H1 (cell line): ENCODE measurements at regions of chr1 and their contacts with region 1.

Region 1: GRCh38 chr1:153816283-153816889 is 41.2 kb downstream of the SLC27A3 start:
- DNase-seq: no peak
- H3K4me3 ChIP-seq: no peak overlapping the region
- H3K27ac ChIP-seq: no peak overlapping the region
- H3K4me1 ChIP-seq: no peaks in the 10 kb centered on the region
- H3K27me3 ChIP-seq: no peaks in the 10 kb centered on the region
- CTCF ChIP-seq: no peak
- EP300 ChIP-seq: no peak
- POLR2A ChIP-seq: no peak
- RAD21 ChIP-seq: no peak

Region 2: GRCh38 chr1:153790313-153790965 is 25.9 kb before region 1 on chr1:
- CTCF ChIA-PET with region 1: no interaction called
- POLR2A ChIA-PET with region 1: no interaction called
- DNase-seq: no peak
- H3K4me3 ChIP-seq: no peak overlapping the region
- H3K27ac ChIP-seq: no peak overlapping the region
- H3K4me1 ChIP-seq: peaks cover 6 to 28% (median 21%) of the 10 kb centered on the region in 4 experiments
- H3K27me3 ChIP-seq: no peaks in the 10 kb centered on the region; a peak in 1 of 7 replicates
- CTCF ChIP-seq: no peak
- EP300 ChIP-seq: no peak
- POLR2A ChIP-seq: no peak
- RAD21 ChIP-seq: no peak

Region 3: GRCh38 chr1:153805042-153805745 is 11.2 kb before region 1 on chr1:
- CTCF ChIA-PET with region 1: interaction called, 11 read pairs
- POLR2A ChIA-PET with region 1: interaction called, 5 read pairs
- DNase-seq: no peak
- H3K4me3 ChIP-seq: no peak overlapping the region
- H3K27ac ChIP-seq: no peak overlapping the region
- H3K4me1 ChIP-seq: no peaks in the 10 kb centered on the region
- H3K27me3 ChIP-seq: no peaks in the 10 kb centered on the region
- CTCF ChIP-seq: no peak
- EP300 ChIP-seq: no peak
- POLR2A ChIP-seq: no peak
- RAD21 ChIP-seq: no peak

Region 4: DNA sequence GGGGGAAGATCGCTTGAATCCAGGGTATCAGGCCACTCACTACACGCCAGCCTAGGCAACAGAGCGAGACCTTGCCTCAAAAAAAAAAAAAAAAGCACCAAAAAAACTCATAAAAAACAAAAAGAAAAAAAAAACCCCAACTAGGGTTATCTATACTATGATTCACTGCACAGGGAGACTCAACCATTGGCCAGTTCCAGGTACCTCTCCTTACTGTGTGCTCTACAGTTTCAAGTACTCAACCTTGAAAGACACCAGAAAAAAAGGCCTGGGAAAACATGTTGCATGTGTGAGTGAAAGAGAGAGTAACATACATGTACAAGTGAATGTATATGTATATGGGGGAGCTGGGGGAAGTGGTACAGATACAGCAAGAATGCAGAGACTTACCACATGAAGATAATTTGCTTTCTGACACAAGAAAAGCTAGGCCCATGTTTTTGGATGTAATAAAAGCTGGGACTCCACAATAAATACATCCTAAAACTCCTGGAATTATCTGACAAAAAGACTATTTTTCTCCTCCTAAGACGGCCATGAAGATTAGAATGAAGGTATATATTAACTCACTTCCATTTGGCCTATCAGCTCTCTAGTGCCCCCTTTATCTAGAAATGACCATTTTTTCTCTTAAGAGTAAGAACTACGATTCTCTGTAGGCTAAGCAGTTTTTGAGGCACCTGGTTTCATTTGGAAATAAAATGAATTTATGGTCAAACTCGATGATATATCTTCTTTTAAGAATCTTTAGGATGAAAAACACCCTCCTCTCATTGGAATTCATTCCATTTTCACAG is 11.0 kb after region 1 on chr1:
- CTCF ChIA-PET with region 1: interaction called, 19 read pairs
- POLR2A ChIA-PET with region 1: interaction called, 3 read pairs
- DNase-seq: no peak
- H3K4me3 ChIP-seq: no peak overlapping the region
- H3K27ac ChIP-seq: no peak overlapping the region
- H3K4me1 ChIP-seq: no peaks in the 10 kb centered on the region
- H3K27me3 ChIP-seq: no peaks in the 10 kb centered on the region
- CTCF ChIP-seq: peak in 1 of 3 experiments; percentile 20; a peak in 1 of 4 replicates
- EP300 ChIP-seq: no peak
- POLR2A ChIP-seq: no peak
- RAD21 ChIP-seq: no peak